Activated CD4-positive, alpha-beta T cell treated with anti-CD3 and anti-CD28 coated beads for 36 hours (primary cell): ENCODE measurements at regions of chr11 and their contacts with region 1.

Region 1: GRCh38 chr11:44936525-44936924 is 14.2 kb downstream of the TP53I11 start:
- DNase-seq: peak; percentile 90
- ATAC-seq: peak; percentile 94
- H3K4me3 Mint-ChIP-seq: no peak overlapping the region
- H3K27ac Mint-ChIP-seq: no peak overlapping the region
- H3K4me1 Mint-ChIP-seq: no peaks in the 10 kb centered on the region
- H3K27me3 Mint-ChIP-seq: no peaks in the 10 kb centered on the region

Region 2: DNA sequence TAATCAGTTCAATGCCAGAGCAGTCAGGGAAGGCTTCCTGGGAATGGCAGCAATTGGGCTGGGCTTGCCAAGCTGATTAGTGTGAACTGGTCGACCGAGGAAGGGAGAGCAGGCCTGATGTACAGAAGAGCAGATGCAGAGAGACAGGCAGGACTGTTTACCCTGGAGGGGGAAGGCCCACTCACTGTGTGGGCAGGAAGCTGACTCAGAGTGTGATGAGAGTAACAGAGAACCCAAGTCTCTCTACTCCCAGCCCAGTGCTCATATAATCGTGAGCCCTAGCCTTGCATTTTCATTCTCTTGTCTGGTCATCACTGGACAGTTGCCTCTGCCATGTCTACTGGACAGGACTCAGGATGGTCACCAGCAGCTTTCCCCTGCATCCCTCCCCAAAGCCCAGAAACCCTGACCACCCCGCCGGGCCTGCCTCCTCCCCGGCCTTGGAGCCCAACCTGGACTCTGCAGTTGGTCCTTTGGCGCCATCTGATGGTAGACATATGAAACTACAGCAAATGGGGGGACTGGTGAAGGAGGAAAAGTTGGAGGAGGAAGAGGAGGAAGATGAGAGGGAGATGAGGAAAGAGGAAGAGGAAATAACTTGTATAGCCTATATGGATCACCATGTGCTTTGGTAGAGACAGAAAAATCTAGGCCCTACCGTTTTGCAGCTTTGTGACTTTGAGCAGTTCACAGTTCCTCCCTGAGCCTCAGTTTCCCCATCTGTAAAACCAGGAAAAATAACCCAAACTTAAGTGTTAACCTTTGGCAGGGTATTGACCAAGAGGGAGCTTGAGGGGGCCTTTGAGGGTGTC is 166.5 kb after region 1 on chr11:
- CTCF ChIA-PET with region 1: interaction called, 798 read pairs
- POLR2A ChIA-PET with region 1: no interaction called
- intact Hi-C with region 1: loop called (anchors 1 kb)
- DNase-seq: peak; percentile 85
- ATAC-seq: peak; percentile 98
- H3K4me3 Mint-ChIP-seq: peak overlapping the region; percentile 47
- H3K27ac Mint-ChIP-seq: peak overlapping the region; percentile 59
- H3K4me1 Mint-ChIP-seq: peaks cover 18% of the 10 kb centered on the region
- H3K27me3 Mint-ChIP-seq: peaks cover 7% of the 10 kb centered on the region

Region 3: GRCh38 chr11:45301537-45302246 is 365.2 kb after region 1 on chr11:
- CTCF ChIA-PET with region 1: no interaction called
- POLR2A ChIA-PET with region 1: no interaction called
- intact Hi-C with region 1: loop called in 1 of 2 experiments (anchors 5 kb)
- DNase-seq: no peak
- ATAC-seq: no peak
- H3K4me3 Mint-ChIP-seq: no peak overlapping the region
- H3K27ac Mint-ChIP-seq: no peak overlapping the region
- H3K4me1 Mint-ChIP-seq: no peaks in the 10 kb centered on the region
- H3K27me3 Mint-ChIP-seq: peaks cover 6% of the 10 kb centered on the region

Region 4: DNA sequence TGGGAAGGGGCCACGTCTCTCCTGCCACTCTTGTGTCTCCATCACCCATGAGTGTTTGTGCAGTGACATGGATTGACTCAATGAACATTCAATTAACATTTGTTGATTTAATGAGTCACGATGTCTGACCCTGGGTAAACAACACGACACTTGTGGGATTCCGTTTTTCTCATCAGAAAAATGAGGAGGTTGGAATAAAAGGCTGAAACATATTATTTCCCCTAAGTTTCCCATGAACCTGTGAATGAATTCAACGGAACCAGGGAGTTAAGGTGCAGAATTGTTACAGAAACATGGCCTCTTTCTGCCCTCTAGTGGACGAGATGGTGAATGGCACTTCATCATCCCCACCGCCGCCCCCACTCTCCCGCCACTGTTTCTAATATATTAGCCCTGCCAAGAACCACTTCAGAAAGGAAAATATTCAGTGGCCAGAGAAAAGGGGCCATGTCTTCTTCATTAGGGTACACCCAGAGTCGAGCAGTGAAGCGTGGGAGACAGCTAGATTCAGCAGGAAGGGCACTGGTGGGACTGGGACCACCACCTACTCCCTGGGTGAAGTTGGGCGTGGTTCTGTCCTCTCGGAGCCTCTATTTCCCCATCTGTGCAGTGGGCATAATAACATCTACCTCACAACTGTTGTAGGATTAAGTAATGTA is 395.9 kb after region 1 on chr11:
- CTCF ChIA-PET with region 1: interaction called, 5 read pairs
- POLR2A ChIA-PET with region 1: no interaction called
- intact Hi-C with region 1: loop called (anchors 2 to 10 kb)
- DNase-seq: peak; percentile 51
- ATAC-seq: peak; percentile 57
- H3K4me3 Mint-ChIP-seq: no peak overlapping the region
- H3K27ac Mint-ChIP-seq: no peak overlapping the region
- H3K4me1 Mint-ChIP-seq: no peaks in the 10 kb centered on the region
- H3K27me3 Mint-ChIP-seq: peaks cover 8% of the 10 kb centered on the region